SK-N-SH (cell line): ENCODE measurements at regions of chr5 and their contacts with region 1.

Region 1: GRCh38 chr5:170747851-170748250 is 35.7 kb upstream of the GABRP start:
- DNase-seq: peak; percentile 59
- H3K4me3 ChIP-seq: no peak overlapping the region
- H3K27ac ChIP-seq: peak overlapping the region in 1 of 2 experiments; percentile 20; a peak in 1 of 4 replicates
- H3K4me1 ChIP-seq: peaks cover 0 to 77% of the 10 kb centered on the region in 2 experiments; a peak in 2 of 4 replicates
- H3K27me3 ChIP-seq: no peaks in the 10 kb centered on the region
- CTCF ChIP-seq: peak; percentile 48
- EP300 ChIP-seq: no peak
- RAD21 ChIP-seq: peak; percentile 33; the same call in 1 of the 2 replicates

Region 2: GRCh38 chr5:170722316-170722715 is 25.5 kb before region 1 on chr5:
- CTCF ChIA-PET with region 1: interaction called, 22 read pairs
- POLR2A ChIA-PET with region 1: interaction called, 4 read pairs
- DNase-seq: no peak
- H3K4me3 ChIP-seq: no peak overlapping the region
- H3K27ac ChIP-seq: no peak overlapping the region
- H3K4me1 ChIP-seq: no peaks in the 10 kb centered on the region
- H3K27me3 ChIP-seq: peaks cover 5% of the 10 kb centered on the region; the same call in 1 of the 2 replicates
- CTCF ChIP-seq: no peak
- EP300 ChIP-seq: no peak
- RAD21 ChIP-seq: no peak

Region 3: GRCh38 chr5:170769246-170769645 is 21.4 kb after region 1 on chr5:
- CTCF ChIA-PET with region 1: interaction called, 21 read pairs
- POLR2A ChIA-PET with region 1: no interaction called
- DNase-seq: peak; percentile 42
- H3K4me3 ChIP-seq: no peak overlapping the region
- H3K27ac ChIP-seq: no peak overlapping the region; a peak in 1 of 4 replicates
- H3K4me1 ChIP-seq: peaks cover 0 to 10% of the 10 kb centered on the region in 2 experiments; a peak in 2 of 4 replicates
- H3K27me3 ChIP-seq: no peaks in the 10 kb centered on the region
- CTCF ChIP-seq: no peak
- EP300 ChIP-seq: no peak
- RAD21 ChIP-seq: no peak

Region 4: DNA sequence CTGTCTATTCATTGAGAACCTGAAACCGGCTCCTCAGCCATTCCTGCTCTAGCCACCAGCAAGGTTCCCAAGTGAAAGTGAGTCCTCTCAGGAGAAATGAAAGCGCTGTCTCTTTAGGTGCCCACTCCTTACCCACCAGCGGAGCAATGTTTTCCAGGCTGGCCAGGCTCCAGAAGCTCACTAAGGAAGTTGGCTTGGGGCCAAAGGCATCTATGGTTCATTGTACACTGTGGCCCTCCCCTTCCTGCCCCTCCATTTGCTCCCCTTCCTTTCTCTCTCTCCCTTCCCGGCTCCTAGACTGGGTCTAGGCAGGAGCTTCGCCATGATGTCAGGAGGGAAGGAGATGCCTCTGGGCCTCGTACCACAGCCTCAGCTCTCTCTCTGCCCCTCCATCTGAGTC is 34.6 kb after region 1 on chr5:
- CTCF ChIA-PET with region 1: interaction called, 511 read pairs
- POLR2A ChIA-PET with region 1: no interaction called
- DNase-seq: no peak
- H3K4me3 ChIP-seq: no peak overlapping the region
- H3K27ac ChIP-seq: peak overlapping the region in 1 of 2 experiments; percentile 22; a peak in 1 of 4 replicates
- H3K4me1 ChIP-seq: peaks cover 0 to 29% of the 10 kb centered on the region in 2 experiments; a peak in 1 of 4 replicates
- H3K27me3 ChIP-seq: no peaks in the 10 kb centered on the region; the same call in 1 of the 2 replicates
- CTCF ChIP-seq: no peak
- EP300 ChIP-seq: no peak
- RAD21 ChIP-seq: no peak

Region 5: DNA sequence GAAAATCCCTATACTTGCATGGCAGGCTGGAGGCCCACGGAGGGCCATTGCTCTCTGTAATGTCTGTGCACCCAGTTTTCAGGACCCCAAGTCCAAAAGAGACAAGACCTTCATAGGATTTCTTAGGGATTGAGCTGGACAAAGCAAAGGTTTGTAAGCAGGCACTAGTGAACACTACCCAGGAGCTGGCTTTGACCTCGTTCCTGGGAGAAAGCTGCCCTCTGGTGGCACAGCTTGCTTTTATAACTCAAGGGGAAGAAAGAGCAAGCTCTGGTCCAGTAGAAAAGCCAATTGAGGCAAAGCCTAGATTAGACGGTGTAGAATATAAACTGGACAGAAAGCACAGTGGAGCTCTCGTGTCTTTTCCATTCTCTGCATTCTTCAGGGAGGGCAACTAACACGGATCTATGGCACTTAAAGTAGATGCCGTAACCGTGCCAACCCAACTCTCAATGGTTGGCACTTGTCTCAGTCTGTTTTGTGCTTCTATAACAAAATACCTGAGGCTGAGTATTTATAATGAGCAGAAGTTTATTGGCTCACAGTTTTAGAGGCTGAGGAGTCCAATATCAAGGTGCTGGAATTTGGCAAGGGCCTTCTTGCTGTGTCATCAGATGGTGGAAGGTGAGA is 43.6 kb after region 1 on chr5:
- CTCF ChIA-PET with region 1: interaction called, 511 read pairs
- POLR2A ChIA-PET with region 1: interaction called, 12 read pairs
- DNase-seq: peak; percentile 76
- H3K4me3 ChIP-seq: no peak overlapping the region; a peak in 1 of 4 replicates
- H3K27ac ChIP-seq: no peak overlapping the region
- H3K4me1 ChIP-seq: peaks cover 0 to 5% of the 10 kb centered on the region in 2 experiments; a peak in 1 of 4 replicates
- H3K27me3 ChIP-seq: no peaks in the 10 kb centered on the region; the same call in 1 of the 2 replicates
- CTCF ChIP-seq: peak; percentile 63
- EP300 ChIP-seq: no peak
- RAD21 ChIP-seq: peak; percentile 96

Region 6: DNA sequence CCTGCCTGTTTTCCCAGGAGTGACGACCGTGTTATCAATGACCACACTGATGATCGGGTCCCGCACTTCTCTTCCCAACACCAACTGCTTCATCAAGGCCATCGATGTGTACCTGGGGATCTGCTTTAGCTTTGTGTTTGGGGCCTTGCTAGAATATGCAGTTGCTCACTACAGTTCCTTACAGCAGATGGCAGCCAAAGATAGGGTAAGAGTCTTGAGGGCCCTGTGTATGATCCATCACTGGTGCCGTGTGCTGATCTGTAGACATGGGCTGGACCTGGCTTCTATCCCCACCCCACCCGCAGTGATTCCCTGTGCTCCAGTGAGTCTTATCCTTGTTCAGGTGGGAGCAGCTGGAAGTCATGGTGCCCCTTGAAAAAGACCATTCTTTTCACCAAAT is 61.7 kb after region 1 on chr5:
- CTCF ChIA-PET with region 1: interaction called, 13 read pairs
- POLR2A ChIA-PET with region 1: no interaction called
- DNase-seq: peak; percentile 41
- H3K4me3 ChIP-seq: no peak overlapping the region
- H3K27ac ChIP-seq: no peak overlapping the region
- H3K4me1 ChIP-seq: no peaks in the 10 kb centered on the region
- H3K27me3 ChIP-seq: no peaks in the 10 kb centered on the region
- CTCF ChIP-seq: peak; percentile 54
- EP300 ChIP-seq: no peak
- RAD21 ChIP-seq: peak; percentile 72

Region 7: DNA sequence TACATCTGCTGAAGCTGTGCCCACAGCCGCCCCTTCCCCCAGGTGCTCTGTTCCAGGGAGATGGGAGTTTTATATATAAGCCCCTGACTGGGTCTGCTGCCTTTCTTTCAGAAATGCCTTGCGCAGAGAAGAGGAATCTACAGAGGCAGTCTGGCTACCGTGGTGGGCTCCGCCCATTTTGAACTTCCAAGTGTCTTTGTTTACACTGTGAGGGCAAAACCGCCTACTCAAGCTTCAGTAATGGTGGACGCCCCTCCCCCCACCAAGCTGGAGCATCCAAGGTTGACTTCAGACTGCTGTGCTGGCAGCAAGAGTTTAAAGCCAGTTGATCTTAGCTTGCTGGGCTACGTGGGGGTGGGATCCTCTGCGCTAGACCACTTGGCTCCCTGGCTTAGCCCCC is 155.2 kb after region 1 on chr5:
- CTCF ChIA-PET with region 1: no interaction called
- POLR2A ChIA-PET with region 1: no interaction called
- DNase-seq: no peak
- H3K4me3 ChIP-seq: no peak overlapping the region
- H3K27ac ChIP-seq: no peak overlapping the region
- H3K4me1 ChIP-seq: no peaks in the 10 kb centered on the region
- H3K27me3 ChIP-seq: no peaks in the 10 kb centered on the region
- CTCF ChIP-seq: no peak
- EP300 ChIP-seq: no peak
- RAD21 ChIP-seq: no peak